WTC11 (cell line): ENCODE measurements at regions of chr7 and their contacts with region 1.

Region 1: DNA sequence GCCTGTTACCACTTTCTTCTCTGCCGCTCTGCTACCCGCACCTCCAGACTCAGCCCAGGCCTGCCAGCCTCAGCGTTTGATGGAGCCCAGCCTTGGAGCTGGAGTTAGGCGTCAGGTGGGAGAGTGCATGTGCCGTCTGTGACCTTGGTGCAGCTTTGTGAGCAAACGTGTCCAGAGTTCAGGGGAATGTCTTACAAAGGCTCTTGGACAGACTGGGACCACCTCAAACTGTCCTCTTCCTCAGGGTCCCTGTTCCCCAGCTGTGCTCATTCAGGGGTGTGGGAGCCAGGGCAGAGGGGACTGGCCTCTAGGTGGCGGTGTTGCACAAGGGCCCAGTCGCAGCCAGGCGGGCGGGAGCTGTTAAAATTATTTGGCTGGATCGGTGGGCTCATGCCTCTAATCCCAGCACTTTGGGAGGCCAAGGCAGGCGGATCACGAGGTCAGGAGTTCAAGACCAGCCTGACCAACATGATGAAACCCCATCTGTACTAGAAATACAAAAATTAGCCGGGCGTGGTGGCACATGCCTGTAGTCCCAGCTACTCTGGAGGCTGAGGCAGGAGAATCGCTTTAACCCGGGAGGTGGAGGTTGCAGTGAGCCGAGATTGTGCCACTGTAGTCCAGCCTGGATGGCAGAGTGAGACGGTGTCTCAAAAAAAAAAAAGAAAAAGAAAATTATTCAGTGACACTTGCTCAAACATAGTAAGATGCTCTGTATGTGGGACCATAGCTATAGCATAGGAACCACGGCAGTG is 89.2 kb downstream of the ADCY1 start:
- DNase-seq: peak; percentile 78
- ATAC-seq: peak; percentile 86
- H3K4me3 Mint-ChIP-seq: no peak overlapping the region
- H3K27ac Mint-ChIP-seq: peak overlapping the region; percentile 36; the same call in 1 of the 2 replicates
- H3K4me1 Mint-ChIP-seq: no peaks in the 10 kb centered on the region
- H3K27me3 Mint-ChIP-seq: no peaks in the 10 kb centered on the region
- CTCF ChIP-seq: peak; percentile 82

Region 2: GRCh38 chr7:45580053-45580872 is 83.1 kb before region 1 on chr7:
- CTCF ChIA-PET with region 1: interaction called, 14 read pairs
- POLR2A ChIA-PET with region 1: no interaction called
- DNase-seq: peak; percentile 65
- ATAC-seq: peak; percentile 46
- H3K4me3 Mint-ChIP-seq: no peak overlapping the region
- H3K27ac Mint-ChIP-seq: no peak overlapping the region
- H3K4me1 Mint-ChIP-seq: peaks cover 77% of the 10 kb centered on the region
- H3K27me3 Mint-ChIP-seq: peaks cover 14% of the 10 kb centered on the region
- CTCF ChIP-seq: peak; percentile 60

Region 3: GRCh38 chr7:45642044-45642443 is 21.3 kb before region 1 on chr7:
- CTCF ChIA-PET with region 1: interaction called, 20 read pairs
- POLR2A ChIA-PET with region 1: no interaction called
- DNase-seq: no peak
- ATAC-seq: no peak
- H3K4me3 Mint-ChIP-seq: no peak overlapping the region
- H3K27ac Mint-ChIP-seq: no peak overlapping the region
- H3K4me1 Mint-ChIP-seq: peaks cover 7% of the 10 kb centered on the region; the same call in 1 of the 2 replicates
- H3K27me3 Mint-ChIP-seq: no peaks in the 10 kb centered on the region
- CTCF ChIP-seq: no peak

Region 4: GRCh38 chr7:45646996-45647825 is 16.1 kb before region 1 on chr7:
- CTCF ChIA-PET with region 1: interaction called, 20 read pairs
- POLR2A ChIA-PET with region 1: no interaction called
- DNase-seq: no peak
- ATAC-seq: peak; percentile 61
- H3K4me3 Mint-ChIP-seq: no peak overlapping the region
- H3K27ac Mint-ChIP-seq: no peak overlapping the region
- H3K4me1 Mint-ChIP-seq: peaks cover 3% of the 10 kb centered on the region; the same call in 1 of the 2 replicates
- H3K27me3 Mint-ChIP-seq: no peaks in the 10 kb centered on the region
- CTCF ChIP-seq: no peak

Region 5: DNA sequence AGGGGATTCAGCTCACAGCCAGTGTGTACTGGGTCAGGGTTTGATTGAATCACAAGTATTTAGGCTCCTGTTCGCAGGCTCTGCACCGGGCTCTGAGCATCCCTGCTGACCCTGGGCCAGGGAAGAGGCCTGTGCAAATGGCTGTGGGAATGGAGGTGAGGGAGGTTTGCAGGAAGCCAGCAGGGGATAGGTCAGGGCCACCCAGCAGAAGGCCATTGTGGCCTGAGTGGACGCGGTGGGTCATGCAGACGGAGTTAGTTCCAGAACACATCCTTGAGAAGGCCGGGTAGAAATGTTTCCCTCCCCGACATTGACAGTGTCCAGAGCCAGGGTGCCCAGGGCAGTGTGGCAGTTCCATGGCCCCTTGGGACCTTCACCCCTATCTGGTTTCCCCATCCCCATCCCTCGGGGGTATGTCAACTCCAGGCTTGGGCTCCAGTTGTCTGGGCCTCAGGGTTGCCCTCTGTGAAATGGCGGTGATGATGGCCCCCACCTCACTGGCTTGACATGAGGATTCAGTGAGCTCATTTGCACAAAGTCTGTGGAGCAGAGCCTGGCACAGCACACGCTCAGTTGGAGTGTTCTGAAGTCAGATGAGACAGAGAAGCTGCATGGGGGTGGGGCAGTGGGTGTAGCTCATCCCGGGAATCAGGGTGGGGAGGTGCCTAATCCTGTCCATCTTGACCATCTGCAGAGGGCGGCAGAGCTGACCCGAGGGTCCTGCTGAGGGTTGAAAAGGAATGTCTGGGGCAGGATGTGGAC is 18.4 kb after region 1 on chr7:
- CTCF ChIA-PET with region 1: interaction called, 20 read pairs
- POLR2A ChIA-PET with region 1: no interaction called
- DNase-seq: peak; percentile 10
- ATAC-seq: no peak
- H3K4me3 Mint-ChIP-seq: no peak overlapping the region
- H3K27ac Mint-ChIP-seq: no peak overlapping the region
- H3K4me1 Mint-ChIP-seq: 0 out of 2 replicates have a peak, but pooled peaks cover 2% of the 10 kb centered on the region
- H3K27me3 Mint-ChIP-seq: no peaks in the 10 kb centered on the region
- CTCF ChIP-seq: no peak

Region 6: GRCh38 chr7:45697576-45698136 is 34.3 kb after region 1 on chr7:
- CTCF ChIA-PET with region 1: interaction called, 12 read pairs
- POLR2A ChIA-PET with region 1: no interaction called
- DNase-seq: peak; percentile 1
- ATAC-seq: no peak
- H3K4me3 Mint-ChIP-seq: no peak overlapping the region
- H3K27ac Mint-ChIP-seq: no peak overlapping the region
- H3K4me1 Mint-ChIP-seq: no peaks in the 10 kb centered on the region
- H3K27me3 Mint-ChIP-seq: no peaks in the 10 kb centered on the region
- CTCF ChIP-seq: no peak